Natural killer cell (primary cell): ENCODE measurements at regions of chr9 and their contacts with region 1.

Region 1: GRCh38 chr9:36102742-36103495 is 33.6 kb upstream of the GLIPR2 start:
- DNase-seq: peak; percentile 77 to 93
- ATAC-seq: peak; percentile 96 to 100 (median 100)
- H3K4me3 ChIP-seq: no peak overlapping the region
- H3K4me3 Mint-ChIP-seq: no peak overlapping the region
- H3K27ac ChIP-seq: no peak overlapping the region
- H3K27ac Mint-ChIP-seq: peak overlapping the region in 1 of 2 donors; percentile 48
- H3K4me1 ChIP-seq: no peaks in the 10 kb centered on the region
- H3K4me1 Mint-ChIP-seq: peaks cover 8 to 9% of the 10 kb centered on the region in 2 donors
- H3K27me3 ChIP-seq: no peaks in the 10 kb centered on the region
- H3K27me3 Mint-ChIP-seq: no peaks in the 10 kb centered on the region
- CTCF ChIP-seq: peak; percentile 88

Region 2: DNA sequence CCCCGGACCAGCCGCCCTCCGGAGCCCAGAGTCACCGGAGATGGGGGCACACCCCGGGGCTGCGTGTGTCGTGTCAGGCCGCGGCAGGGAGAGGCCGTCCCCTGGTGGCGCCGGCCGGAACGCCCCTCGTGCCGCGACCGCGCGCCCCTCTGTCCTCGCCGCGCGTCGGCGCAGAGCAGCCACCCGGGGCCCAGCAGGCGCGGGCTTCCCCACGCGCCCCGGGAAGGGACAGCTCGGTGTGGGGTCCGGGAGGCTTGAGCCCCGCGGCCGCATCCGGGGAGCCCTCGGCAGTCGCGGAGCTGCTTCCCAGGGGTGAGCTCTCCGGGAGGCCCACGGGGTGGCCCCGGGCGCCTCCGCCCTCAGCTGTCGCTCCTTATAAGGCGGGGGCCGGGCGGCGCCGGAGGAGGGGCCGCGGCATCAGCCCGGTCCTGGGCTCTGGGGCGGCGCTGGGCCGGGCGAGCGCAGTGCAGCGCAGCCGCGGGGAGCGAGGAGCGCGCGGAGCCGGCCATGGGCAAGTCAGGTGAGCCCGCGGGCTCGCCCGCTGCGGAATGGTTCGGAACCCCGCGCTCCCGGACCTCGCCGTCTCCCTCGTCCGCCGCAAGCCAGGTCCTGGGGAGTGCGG is 33.5 kb after region 1 on chr9 and contains the start of gene GLIPR2:
- intact Hi-C with region 1: loop called (anchors 5 kb)
- DNase-seq: peak; percentile 81 to 87
- ATAC-seq: peak; percentile 93 to 98 (median 96)
- H3K4me3 ChIP-seq: peak within 1 kb of the TSS; percentile 70
- H3K4me3 Mint-ChIP-seq: peak within 1 kb of the TSS; percentile 96
- H3K27ac ChIP-seq: peak within 1 kb of the TSS; percentile 77
- H3K27ac Mint-ChIP-seq: peak within 1 kb of the TSS; percentile 93 to 100
- H3K4me1 ChIP-seq: peaks cover 57% of the 10 kb centered on the region
- H3K4me1 Mint-ChIP-seq: peaks cover 45 to 52% of the 10 kb centered on the region in 2 donors
- H3K27me3 ChIP-seq: no peaks in the 10 kb centered on the region
- H3K27me3 Mint-ChIP-seq: no peaks in the 10 kb centered on the region
- CTCF ChIP-seq: no peak
- total RNA-seq, gene GLIPR2: 124 to 135 (median 125) TPM

Region 3: GRCh38 chr9:36166101-36166927 is 63.4 kb after region 1 on chr9:
- intact Hi-C with region 1: loop called (anchors 1 kb)
- DNase-seq: peak; percentile 88 to 89
- ATAC-seq: peak; percentile 96 to 99 (median 96)
- H3K4me3 ChIP-seq: peak overlapping the region; percentile 18
- H3K4me3 Mint-ChIP-seq: peak overlapping the region; percentile 72
- H3K27ac ChIP-seq: no peak overlapping the region
- H3K27ac Mint-ChIP-seq: peak overlapping the region; percentile 50 to 74
- H3K4me1 ChIP-seq: peaks cover 16% of the 10 kb centered on the region
- H3K4me1 Mint-ChIP-seq: peaks cover 4 to 22% of the 10 kb centered on the region in 2 donors
- H3K27me3 ChIP-seq: no peaks in the 10 kb centered on the region
- H3K27me3 Mint-ChIP-seq: peaks cover 0 to 6% of the 10 kb centered on the region in 2 donors
- CTCF ChIP-seq: peak; percentile 98

Region 4: DNA sequence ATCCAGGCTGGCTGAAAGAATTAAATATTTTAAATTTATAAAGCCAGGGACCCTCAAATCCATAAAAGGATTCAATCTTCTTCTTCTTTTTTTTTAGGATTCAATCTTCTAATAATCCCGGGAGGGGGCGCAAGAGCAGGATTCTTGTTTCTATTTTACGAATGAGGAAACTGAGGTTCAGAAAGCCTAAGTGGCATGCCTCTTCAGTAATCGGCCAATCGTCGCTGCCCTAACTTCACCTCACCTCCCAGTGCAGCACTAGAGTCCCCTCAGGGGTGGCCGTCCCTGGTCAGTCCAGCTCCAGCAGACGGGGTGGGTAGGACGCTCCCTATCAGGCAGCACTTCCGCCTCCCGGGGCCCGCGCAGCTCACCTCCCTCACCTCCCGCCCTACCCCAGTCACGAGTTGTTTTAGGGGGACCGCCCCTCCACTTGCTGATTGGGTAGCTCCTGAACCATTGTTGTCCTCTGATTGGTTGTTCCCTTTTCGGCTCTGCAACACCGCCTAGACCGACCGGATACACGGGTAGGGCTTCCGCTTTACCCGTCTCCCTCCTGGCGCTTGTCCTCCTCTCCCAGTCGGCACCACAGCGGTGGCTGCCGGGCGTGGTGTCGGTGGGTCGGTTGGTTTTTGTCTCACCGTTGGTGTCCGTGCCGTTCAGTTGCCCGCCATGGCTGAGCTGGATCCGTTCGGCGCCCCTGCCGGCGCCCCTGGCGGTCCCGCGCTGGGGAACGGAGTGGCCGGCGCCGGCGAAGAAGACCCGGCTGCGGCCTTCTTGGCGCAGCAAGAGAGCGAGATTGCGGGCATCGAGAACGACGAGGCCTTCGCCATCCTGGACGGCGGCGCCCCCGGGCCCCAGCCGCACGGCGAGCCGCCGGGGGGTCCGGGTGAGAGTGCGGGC is 87.7 kb after region 1 on chr9 and contains the start of gene CLTA:
- intact Hi-C with region 1: loop called (anchors 1 kb)
- DNase-seq: peak; percentile 88 to 98
- ATAC-seq: peak; percentile 93 to 98 (median 97)
- H3K4me3 ChIP-seq: peak within 1 kb of the TSS; percentile 85
- H3K4me3 Mint-ChIP-seq: peak within 1 kb of the TSS; percentile 98
- H3K27ac ChIP-seq: peak within 1 kb of the TSS; percentile 88
- H3K27ac Mint-ChIP-seq: peak within 1 kb of the TSS; percentile 84 to 91
- H3K4me1 ChIP-seq: peaks cover 35% of the 10 kb centered on the region
- H3K4me1 Mint-ChIP-seq: peaks cover 62 to 74% of the 10 kb centered on the region in 2 donors
- H3K27me3 ChIP-seq: no peaks in the 10 kb centered on the region
- H3K27me3 Mint-ChIP-seq: no peaks in the 10 kb centered on the region
- CTCF ChIP-seq: peak; percentile 44
- total RNA-seq, gene CLTA: 49.4 to 62.0 (median 52.6) TPM

Region 5: DNA sequence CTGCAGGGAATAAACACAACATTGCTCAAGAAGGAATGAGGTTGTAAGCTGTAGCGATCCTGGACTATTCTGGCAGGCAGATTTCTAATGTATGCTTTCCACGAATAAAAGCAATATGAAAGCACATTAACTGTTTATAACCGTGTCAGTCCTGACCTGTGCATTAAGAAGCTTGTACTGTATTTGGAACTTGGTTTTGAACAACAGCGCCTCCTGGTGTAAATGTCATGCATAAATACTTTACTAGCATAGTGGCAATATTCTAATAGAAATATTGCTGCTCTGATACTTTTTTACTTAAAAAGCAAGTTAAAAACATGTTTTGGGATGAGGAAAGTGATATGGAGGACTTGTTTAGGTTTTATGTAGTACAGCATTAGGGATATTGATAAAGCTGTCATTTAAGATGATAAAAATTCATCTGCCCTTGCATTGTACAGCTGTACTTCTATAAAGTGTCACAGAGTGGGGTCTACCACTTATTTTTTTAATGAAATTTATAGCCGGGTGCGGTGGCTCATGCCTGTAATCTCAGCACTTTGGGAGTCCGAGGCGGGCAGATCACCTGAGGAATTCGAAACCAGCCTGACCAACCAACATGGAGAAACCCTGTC is 226.0 kb after region 1 on chr9:
- intact Hi-C with region 1: loop called (anchors 2 kb)
- DNase-seq: peak in 1 of 2 donors; percentile 83
- ATAC-seq: peak; percentile 68 to 75 (median 71)
- H3K4me3 ChIP-seq: no peak overlapping the region
- H3K4me3 Mint-ChIP-seq: no peak overlapping the region
- H3K27ac ChIP-seq: no peak overlapping the region
- H3K27ac Mint-ChIP-seq: no peak overlapping the region
- H3K4me1 ChIP-seq: no peaks in the 10 kb centered on the region
- H3K4me1 Mint-ChIP-seq: no peaks in the 10 kb centered on the region
- H3K27me3 ChIP-seq: no peaks in the 10 kb centered on the region
- H3K27me3 Mint-ChIP-seq: no peaks in the 10 kb centered on the region
- CTCF ChIP-seq: peak; percentile 91